PC-9 (cell line): ENCODE measurements at regions of chr3 and their contacts with region 1.

Region 1: DNA sequence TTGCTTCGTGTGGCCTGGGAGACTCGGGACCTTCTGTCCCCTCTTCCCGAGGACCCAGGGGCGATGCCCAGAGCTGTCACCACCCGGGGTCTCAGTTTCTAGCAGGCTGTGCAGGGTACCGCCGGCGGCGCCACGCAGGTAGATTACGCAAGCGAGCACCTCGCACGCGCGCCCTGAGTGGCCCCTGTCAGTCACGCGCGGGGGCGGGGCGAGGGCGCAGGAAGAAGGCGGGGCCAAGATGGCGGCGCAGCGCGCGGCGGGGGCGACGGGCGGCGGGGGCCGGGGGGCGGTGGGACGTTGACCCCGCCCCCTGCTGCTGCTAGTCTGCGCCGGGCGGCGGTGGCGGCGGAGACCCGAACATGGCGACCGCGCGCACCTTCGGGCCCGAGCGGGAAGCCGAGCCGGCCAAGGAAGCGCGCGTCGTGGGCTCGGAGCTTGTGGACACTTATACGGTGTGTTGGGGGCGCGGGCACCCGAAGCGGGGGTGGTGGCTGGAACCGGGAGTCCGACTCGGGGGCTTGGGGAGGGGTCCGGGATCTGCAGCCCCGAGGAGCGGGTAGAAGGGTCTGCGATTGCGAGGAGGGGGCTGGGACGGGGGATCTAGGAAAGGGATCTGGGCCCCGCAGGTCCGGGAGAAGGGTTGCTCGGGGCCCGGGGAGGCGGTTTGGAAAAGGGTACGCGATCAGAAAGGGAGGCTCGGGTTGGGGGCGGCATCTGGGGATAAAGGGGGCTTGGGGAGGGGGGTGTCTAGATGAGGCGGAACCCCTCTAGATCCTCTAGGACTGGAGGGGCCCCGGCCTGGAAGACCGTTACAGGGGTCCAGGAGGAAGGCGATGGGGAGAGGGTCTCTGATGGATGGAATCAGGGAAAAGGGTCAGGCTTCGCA is at the start of gene NISCH:
- DNase-seq: peak in 1 of 2 experiments; percentile 92
- H3K4me3 ChIP-seq: peak within 1 kb of the TSS; percentile 81
- H3K27ac ChIP-seq: no peak within 1 kb of the TSS
- H3K4me1 ChIP-seq: peaks cover 27% of the 10 kb centered on the region
- H3K27me3 ChIP-seq: no peaks in the 10 kb centered on the region
- CTCF ChIP-seq: no peak
- total RNA-seq, gene NISCH: 66.1 and 68.0 TPM in 2 replicates

Region 2: GRCh38 chr3:52527039-52527731 is 71.7 kb after region 1 on chr3:
- CTCF ChIA-PET with region 1: no interaction called
- POLR2A ChIA-PET with region 1: no interaction called
- intact Hi-C with region 1: loop called (anchors 2 kb)
- DNase-seq: peak in 1 of 2 experiments; percentile 52
- H3K4me3 ChIP-seq: no peak overlapping the region
- H3K27ac ChIP-seq: no peak overlapping the region
- H3K4me1 ChIP-seq: peaks cover 10% of the 10 kb centered on the region
- H3K27me3 ChIP-seq: no peaks in the 10 kb centered on the region
- CTCF ChIP-seq: no peak

Region 3: DNA sequence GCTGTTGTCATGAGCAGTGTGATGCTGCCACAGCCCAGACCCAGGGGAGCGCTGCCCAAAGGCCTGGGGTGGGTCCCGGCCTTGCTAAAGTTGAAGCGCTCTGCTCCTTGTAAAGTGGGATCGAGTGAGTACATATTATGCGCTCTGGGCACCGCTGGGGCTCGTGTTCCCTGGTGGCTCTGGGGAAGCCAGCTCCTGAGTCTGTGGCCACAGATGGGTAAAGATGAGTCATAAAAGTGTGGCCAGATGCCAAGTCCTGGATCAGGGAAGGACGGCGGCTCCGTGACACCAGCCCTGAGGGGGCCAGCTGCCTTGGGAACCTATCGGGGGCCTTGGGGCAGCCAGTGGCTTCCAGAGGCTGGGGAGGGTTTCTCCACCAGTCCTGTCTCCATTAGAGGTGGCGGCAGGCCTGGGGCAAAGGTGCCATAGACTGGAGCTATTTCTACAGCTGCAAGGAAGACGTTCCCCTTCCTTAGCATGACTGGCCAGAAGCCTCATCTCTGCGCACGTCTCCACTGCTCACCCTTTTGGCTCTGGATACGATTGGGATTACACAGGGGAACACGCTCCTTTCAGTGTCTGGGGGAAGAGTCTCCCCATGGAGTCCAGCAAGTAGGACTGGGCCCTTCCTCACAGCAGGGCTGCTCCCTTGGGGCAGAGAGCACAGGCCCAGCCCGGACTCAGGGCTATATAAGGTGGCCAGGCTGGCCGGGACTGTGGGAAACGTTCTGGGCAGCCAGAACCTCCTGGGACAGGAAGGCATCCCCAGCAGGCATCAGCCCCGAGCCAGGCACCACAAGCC is 376.2 kb after region 1 on chr3:
- CTCF ChIA-PET with region 1: no interaction called
- POLR2A ChIA-PET with region 1: no interaction called
- intact Hi-C with region 1: no loop called
- DNase-seq: peak; percentile 71 to 81
- H3K4me3 ChIP-seq: no peak overlapping the region
- H3K27ac ChIP-seq: no peak overlapping the region
- H3K4me1 ChIP-seq: peaks cover 11% of the 10 kb centered on the region
- H3K27me3 ChIP-seq: no peaks in the 10 kb centered on the region
- CTCF ChIP-seq: no peak